CD14-positive monocyte (primary cell): ENCODE measurements at regions of chr17 and their contacts with region 1.

Region 1: DNA sequence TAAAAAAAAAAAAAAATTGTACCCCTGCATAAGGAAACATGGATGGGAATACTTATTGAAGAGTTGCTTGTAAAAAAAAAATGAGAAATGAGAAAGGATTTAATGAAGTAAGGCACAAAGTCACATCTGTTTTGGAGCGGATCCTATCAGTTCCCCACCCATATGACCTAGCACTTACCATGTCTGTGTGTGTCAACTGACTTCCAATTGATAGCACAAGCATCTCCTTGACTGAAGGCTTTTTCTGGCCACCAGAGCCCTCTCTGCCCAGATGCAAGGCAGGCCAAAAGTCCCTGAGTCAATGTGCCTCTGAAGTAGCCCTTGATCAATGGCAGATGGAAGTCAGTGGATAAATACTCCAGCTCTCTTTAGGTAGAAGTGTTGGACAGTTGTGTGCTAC is 13.4 kb upstream of the NLK start:
- DNase-seq: no peak
- H3K4me3 ChIP-seq: no peak overlapping the region
- H3K4me3 Mint-ChIP-seq: no peak overlapping the region
- H3K27ac ChIP-seq: no peak overlapping the region
- H3K27ac Mint-ChIP-seq: no peak overlapping the region
- H3K4me1 ChIP-seq: peaks cover 0 to 3% of the 10 kb centered on the region in 2 donors
- H3K4me1 Mint-ChIP-seq: peaks cover 8% of the 10 kb centered on the region
- H3K27me3 ChIP-seq: no peaks in the 10 kb centered on the region
- H3K27me3 Mint-ChIP-seq: peaks cover 0 to 2% (median 1%) of the 10 kb centered on the region in 3 donors
- CTCF ChIP-seq: no peak

Region 2: GRCh38 chr17:27968206-27968732 is 60.8 kb before region 1 on chr17:
- intact Hi-C with region 1: loop called in 1 of 2 experiments (anchors 10 kb)
- DNase-seq: no peak
- H3K4me3 ChIP-seq: no peak overlapping the region
- H3K4me3 Mint-ChIP-seq: no peak overlapping the region
- H3K27ac ChIP-seq: no peak overlapping the region
- H3K27ac Mint-ChIP-seq: no peak overlapping the region
- H3K4me1 ChIP-seq: no peaks in the 10 kb centered on the region
- H3K4me1 Mint-ChIP-seq: no peaks in the 10 kb centered on the region
- H3K27me3 ChIP-seq: no peaks in the 10 kb centered on the region
- H3K27me3 Mint-ChIP-seq: peaks cover 2 to 4% (median 4%) of the 10 kb centered on the region in 3 donors
- CTCF ChIP-seq: no peak